K562 (cell line): ENCODE measurements at regions of chr2 and their contacts with region 1.

Region 1: DNA sequence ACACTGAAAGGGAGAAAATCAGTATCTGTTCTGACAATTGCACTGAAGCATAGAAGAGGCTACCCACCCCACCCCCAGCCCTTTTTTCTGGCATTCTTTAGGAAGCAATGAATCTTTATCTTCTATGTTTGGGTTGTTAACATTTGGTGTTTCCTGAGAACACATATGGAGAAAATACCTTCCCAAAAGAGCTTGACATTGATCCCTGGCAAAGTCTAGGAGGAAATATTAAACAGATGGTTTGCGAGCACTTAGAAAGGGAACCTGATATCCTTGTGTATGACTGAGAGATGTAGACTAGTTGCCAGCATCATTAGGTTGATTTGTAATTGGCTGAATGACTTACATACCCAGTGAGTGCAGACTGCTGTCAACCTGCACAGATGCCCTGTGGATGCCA is 42.9 kb downstream of the DOK1 start:
- DNase-seq: no peak
- ATAC-seq: no peak
- H3K4me3 ChIP-seq: no peak overlapping the region
- H3K27ac ChIP-seq: no peak overlapping the region
- H3K4me1 ChIP-seq: peaks cover 0 to 6% of the 10 kb centered on the region in 2 experiments; a peak in 3 of 5 replicates
- H3K27me3 ChIP-seq: peaks cover 0 to 2% of the 10 kb centered on the region in 2 experiments; a peak in 1 of 5 replicates
- CTCF ChIP-seq: no peak
- EP300 ChIP-seq: no peak
- POLR2A ChIP-seq: no peak
- RAD21 ChIP-seq: no peak

Region 2: GRCh38 chr2:74261204-74261864 is 336.1 kb before region 1 on chr2:
- CTCF ChIA-PET with region 1: no interaction called
- POLR2A ChIA-PET with region 1: no interaction called
- in situ Hi-C with region 1: loop called (anchors 10 kb)
- intact Hi-C with region 1: no loop called
- DNase-seq: no peak
- ATAC-seq: no peak
- H3K4me3 ChIP-seq: no peak overlapping the region
- H3K27ac ChIP-seq: no peak overlapping the region
- H3K4me1 ChIP-seq: peaks cover 0 to 3% of the 10 kb centered on the region in 2 experiments; a peak in 1 of 5 replicates
- H3K27me3 ChIP-seq: peaks cover 0 to 24% of the 10 kb centered on the region in 2 experiments; a peak in 2 of 5 replicates
- CTCF ChIP-seq: peak; percentile 30 to 46 (median 32); a peak in 3 of 6 replicates
- EP300 ChIP-seq: no peak
- POLR2A ChIP-seq: no peak
- RAD21 ChIP-seq: peak; percentile 26 to 40; a peak in 2 of 4 replicates

Region 3: DNA sequence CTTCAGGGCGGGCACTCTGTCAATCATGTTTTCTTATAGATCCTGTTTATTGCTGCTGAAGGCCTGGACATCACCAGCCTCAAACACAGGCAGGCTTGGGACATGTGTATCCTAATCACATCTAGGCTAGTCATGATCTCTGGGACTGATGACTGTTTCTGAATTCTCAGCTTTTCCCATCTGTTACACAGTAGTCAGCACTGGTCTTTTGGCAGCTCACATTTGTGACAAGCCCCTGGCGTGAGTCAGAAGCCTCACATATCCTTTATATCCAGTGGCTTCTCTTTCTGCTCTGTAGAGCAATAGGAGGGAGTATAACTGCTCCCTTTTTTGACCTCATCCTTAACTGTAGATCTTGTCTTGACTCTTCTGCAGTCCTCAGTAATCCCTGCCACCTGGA is 61.1 kb after region 1 on chr2:
- CTCF ChIA-PET with region 1: no interaction called
- POLR2A ChIA-PET with region 1: no interaction called
- in situ Hi-C with region 1: no loop called
- intact Hi-C with region 1: loop called (anchors 5 kb)
- DNase-seq: no peak
- ATAC-seq: no peak
- H3K4me3 ChIP-seq: no peak overlapping the region
- H3K27ac ChIP-seq: no peak overlapping the region
- H3K4me1 ChIP-seq: peaks cover 6 to 14% of the 10 kb centered on the region in 2 experiments
- H3K27me3 ChIP-seq: peaks cover 18 to 33% of the 10 kb centered on the region in 2 experiments; a peak in 4 of 5 replicates
- CTCF ChIP-seq: no peak
- EP300 ChIP-seq: no peak
- POLR2A ChIP-seq: no peak
- RAD21 ChIP-seq: no peak